Prostate gland (tissue), 2 donors: ENCODE measurements at regions of chr1 and their contacts with region 1.

Region 1: DNA sequence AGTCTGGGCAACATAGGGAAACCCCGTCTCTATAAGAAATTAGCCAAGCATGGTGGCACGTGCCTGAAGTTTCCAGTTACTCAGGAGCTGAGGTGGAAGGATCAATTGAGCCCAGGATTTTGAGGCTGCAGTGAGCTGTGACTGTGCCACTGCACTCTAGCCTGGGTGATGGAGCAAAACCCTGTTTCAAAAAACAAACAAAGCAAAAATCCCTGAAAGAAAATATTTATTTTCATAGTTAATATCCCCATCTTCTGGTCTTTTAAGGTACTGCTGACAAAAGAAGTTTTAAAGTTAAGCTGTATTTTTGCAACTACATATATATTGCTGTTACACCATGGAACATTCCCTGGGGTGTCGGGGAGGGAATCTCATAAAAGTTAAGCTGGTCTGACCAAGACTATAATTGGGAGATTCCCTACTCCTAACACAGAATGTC is 26.0 kb downstream of the VAMP4 start:
- DNase-seq: peak; percentile 4
- H3K4me3 ChIP-seq: no peak overlapping the region
- H3K27ac ChIP-seq: no peak overlapping the region
- H3K4me1 ChIP-seq: no peaks in the 10 kb centered on the region
- H3K27me3 ChIP-seq: no peaks in the 10 kb centered on the region
- CTCF ChIP-seq: peak; percentile 32 to 69 (median 58)
- POLR2A ChIP-seq: no peak

Region 2: DNA sequence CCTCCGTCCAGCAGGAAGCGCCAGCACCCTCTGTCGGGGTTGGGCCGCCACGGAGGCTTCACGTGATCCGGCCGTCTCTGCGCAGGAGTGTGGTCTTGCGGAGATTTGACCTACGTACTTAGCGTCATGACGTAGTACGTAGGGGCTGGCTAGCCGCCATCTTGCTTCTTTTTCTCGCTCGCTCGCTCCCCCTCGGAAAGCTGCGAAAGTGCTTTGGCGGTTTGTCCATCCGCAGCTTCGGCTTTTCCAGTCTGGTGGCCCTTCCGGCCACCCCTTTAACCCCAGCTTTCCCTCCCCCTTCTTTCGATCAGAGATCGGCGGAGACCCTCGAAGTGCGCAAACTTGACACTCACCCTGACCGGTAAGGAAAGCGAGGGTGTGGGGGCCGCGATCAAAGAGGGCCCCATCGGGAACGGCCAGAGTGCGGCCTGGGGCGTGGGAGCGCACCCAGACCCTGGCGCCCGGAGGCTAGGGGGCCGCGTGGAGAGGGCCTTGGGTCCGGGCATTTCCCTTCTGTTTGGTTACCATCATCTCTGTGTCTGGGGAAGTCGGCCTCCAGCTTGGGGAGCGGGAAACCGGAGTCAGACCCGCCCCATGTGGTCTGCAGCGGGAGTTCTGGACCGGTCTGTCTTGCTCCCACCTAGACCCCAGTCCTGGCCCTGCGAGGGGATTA is 230.3 kb before region 1 on chr1 and contains the start of gene PRRC2C:
- intact Hi-C with region 1: loop called (anchors 5 kb)
- DNase-seq: peak; percentile 98
- H3K4me3 ChIP-seq: peak within 1 kb of the TSS; percentile 82 to 85
- H3K27ac ChIP-seq: peak within 1 kb of the TSS; percentile 98
- H3K4me1 ChIP-seq: no peaks in the 10 kb centered on the region
- H3K27me3 ChIP-seq: no peaks in the 10 kb centered on the region
- CTCF ChIP-seq: peak; percentile 71 to 95 (median 86)
- POLR2A ChIP-seq: peak; percentile 80
- total RNA-seq, gene PRRC2C: 70.1 to 115 TPM

Region 3: DNA sequence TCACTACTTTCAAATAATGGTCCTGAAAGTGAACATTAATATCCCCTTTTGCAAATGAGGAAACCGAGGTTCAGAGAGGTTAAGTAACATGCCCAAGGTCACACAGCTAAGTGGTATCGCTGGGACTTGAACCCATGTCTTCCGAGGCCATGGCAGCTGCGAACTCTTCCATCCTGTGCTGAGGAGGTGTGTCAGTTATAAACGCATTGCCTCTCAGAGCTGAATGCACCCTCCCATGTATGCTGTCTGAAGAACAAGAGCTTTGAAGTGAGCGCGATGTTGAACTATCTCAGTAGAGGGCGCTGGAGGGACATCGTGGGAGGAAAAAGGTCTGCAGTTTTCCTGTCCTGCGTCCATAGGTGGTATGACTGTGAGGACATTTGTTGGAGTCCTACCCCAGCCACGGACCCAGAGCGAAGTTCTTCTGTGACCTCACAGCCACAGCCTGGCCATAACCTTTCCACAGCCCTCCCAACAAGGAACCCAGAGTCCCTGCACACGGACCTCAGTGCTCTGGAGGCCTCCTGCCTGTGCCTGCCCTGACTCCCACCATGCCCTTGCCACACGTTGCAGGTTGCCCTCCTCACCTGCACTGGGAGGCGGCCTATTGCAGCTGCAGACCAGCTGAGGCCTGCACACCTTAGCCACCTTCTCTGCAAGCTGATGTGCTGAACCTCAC is 70.9 kb before region 1 on chr1:
- intact Hi-C with region 1: loop called (anchors 1 kb)
- DNase-seq: peak; percentile 84
- H3K4me3 ChIP-seq: no peak overlapping the region
- H3K27ac ChIP-seq: peak overlapping the region; percentile 78 to 80
- H3K4me1 ChIP-seq: peaks cover 13% of the 10 kb centered on the region
- H3K27me3 ChIP-seq: no peaks in the 10 kb centered on the region
- CTCF ChIP-seq: peak; percentile 53 to 85 (median 76)
- POLR2A ChIP-seq: no peak

Region 4: DNA sequence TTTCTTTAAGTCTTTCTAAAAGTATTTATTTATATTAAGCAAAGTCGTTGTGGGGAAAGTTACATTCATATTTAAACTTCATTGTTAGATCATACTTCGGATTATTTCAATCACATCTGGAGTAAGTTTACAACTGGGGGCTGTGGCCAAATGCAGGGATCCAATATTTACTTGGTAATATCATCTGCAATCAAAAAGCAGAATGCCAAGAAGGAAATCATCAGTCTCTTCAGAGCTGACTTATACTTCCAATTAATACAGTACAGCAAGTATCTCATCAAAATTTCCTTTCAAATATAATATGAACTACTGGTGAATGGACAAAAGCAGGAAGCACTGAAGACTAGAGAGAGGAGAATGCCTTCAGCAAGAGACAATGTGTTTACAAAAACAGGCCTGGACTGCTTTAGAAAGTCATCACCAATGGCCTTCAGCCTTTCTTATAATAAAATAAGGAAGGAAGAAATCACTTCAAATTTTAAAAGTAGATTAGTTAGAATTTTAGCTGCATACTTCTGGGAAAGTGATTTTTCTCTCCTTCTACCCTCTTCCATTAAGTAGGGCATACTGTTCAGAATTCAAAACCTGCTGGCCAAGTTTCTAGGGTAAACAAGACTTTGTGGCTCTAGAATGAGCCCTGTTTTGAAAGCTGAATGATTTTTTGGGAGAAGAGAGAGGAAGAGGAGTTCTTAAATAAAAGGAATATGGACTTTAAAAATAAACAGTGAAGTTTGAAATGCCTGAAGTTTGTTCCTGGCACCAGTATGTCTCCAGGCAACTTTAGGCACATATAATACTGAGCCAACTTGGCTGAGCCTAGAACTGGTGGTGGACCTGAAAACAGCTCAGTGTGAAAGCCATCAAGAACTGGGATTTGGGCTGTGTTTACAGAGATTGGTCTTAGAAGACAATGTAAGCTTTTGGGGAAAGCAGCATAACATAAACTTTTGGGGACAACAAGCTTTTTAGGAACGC is 41.1 kb before region 1 on chr1:
- intact Hi-C with region 1: loop called (anchors 5 kb)
- DNase-seq: no peak
- H3K4me3 ChIP-seq: no peak overlapping the region
- H3K27ac ChIP-seq: peak overlapping the region; percentile 25 to 38
- H3K4me1 ChIP-seq: no peaks in the 10 kb centered on the region
- H3K27me3 ChIP-seq: no peaks in the 10 kb centered on the region
- CTCF ChIP-seq: no peak
- POLR2A ChIP-seq: no peak